SK-N-SH (cell line): ENCODE measurements at regions of chr3 and their contacts with region 1.

Region 1: DNA sequence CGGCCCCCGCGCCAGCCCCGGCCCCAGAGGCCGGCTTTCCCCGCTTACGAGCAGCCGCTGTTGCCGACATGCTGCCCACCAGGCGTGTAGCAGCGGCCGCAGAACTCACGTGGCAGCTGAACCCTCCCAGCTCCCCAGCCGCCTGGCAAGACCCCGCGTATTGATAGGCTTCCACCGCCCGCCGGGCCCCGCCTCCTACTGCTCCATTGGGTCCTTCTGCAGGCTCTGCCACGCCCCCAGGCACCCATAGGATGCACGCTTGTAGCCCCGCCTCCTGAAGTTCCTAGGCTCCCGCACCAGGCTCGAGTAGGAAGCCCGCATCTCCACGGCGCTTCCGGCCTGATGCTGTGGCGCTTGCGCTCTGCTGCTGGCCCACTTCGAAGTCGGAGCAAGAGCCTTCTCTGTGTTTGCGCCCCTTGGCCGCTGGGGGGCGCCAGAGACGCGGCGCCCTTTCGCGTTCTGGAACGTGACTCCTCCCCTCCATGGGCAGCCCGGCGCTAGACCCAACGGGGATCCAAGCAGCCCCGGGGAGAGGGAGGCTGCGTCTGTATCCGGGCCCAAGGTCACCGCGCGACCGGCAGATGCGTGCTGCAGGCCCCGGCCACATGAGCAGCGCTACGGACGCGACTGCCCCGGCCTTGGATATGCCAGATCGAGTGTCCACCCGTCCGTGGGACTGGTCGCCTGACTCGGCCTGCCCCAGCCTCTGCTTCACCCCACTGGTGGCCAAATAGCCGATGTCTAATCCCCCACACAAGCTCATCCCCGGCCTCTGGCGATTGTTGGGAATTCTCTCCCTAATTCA is at the starts of genes PARP3 and RRP9:
- DNase-seq: peak; percentile 99
- H3K4me3 ChIP-seq: peak within 1 kb of the TSS; percentile 85 to 95
- H3K27ac ChIP-seq: peak within 1 kb of the TSS; percentile 85 to 97
- H3K4me1 ChIP-seq: peaks cover 11 to 18% of the 10 kb centered on the region in 2 experiments; a peak in 3 of 4 replicates
- H3K27me3 ChIP-seq: no peaks in the 10 kb centered on the region
- CTCF ChIP-seq: peak; percentile 98
- EP300 ChIP-seq: no peak; a peak in 1 of 4 replicates
- RAD21 ChIP-seq: peak; percentile 98
- polyA plus RNA-seq, gene PARP3: 31.1 and 35.2 TPM in 2 replicates
- polyA plus RNA-seq, gene RRP9: 49.6 and 52.0 TPM in 2 replicates

Region 2: DNA sequence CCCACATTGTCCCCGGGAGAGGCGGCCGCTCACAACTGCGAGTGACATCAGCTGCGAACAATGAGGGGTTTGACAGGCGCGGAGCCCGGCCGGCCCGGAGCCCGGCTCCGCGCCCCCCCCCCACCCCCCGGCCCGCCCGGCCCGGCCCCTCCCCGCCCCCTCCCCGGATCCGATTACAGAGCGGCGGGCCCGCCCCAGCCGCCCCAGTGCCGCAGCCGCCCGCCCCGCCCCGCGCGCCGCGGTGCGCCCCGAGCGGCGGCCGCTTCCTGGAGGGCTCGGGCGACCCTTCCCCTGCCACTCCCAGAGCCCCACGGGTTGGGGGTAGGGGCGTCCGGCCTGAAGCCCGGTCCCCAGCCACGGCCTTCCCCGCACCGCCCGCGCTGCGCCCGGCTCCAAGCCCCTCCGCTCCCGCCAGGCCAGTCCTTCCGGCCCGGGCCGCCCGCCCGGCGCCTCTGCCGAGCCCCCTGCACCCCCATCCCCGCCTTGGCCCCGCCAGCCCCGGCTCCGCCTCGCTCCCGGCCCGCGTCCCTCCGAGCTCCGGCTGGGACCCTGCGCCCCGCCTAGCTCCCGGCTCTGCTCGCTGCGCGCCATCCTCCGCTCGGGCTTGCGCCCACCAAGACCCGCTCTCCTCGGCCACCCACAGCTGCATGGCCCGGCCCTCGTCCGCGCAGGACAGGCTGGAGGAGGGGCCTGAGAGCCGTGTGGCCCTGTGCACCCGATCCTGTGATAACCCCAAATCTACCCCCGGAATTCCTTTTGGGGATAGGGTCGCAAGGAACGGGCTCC is 25.6 kb after region 1 on chr3 and contains the start of gene PCBP4:
- CTCF ChIA-PET with region 1: interaction called, 80 read pairs
- POLR2A ChIA-PET with region 1: interaction called, 19 read pairs
- DNase-seq: peak; percentile 88
- H3K4me3 ChIP-seq: peak within 1 kb of the TSS; percentile 76 to 79
- H3K27ac ChIP-seq: peak within 1 kb of the TSS; percentile 54 to 97
- H3K4me1 ChIP-seq: peaks cover 4 to 67% of the 10 kb centered on the region in 2 experiments; a peak in 2 of 4 replicates
- H3K27me3 ChIP-seq: no peaks in the 10 kb centered on the region
- CTCF ChIP-seq: no peak
- EP300 ChIP-seq: no peak
- RAD21 ChIP-seq: no peak
- polyA plus RNA-seq, gene PCBP4: 97.4 and 118 TPM in 2 replicates

Region 3: GRCh38 chr3:51974963-51975851 is 33.2 kb after region 1 on chr3 and contains the start of gene ABHD14A:
- CTCF ChIA-PET with region 1: interaction called, 80 read pairs
- POLR2A ChIA-PET with region 1: interaction called, 13 read pairs
- DNase-seq: peak; percentile 92
- H3K4me3 ChIP-seq: peak within 1 kb of the TSS; percentile 53 to 85
- H3K27ac ChIP-seq: peak within 1 kb of the TSS; percentile 63 to 90; a peak in 3 of 4 replicates
- H3K4me1 ChIP-seq: peaks cover 7 to 31% of the 10 kb centered on the region in 2 experiments
- H3K27me3 ChIP-seq: no peaks in the 10 kb centered on the region
- CTCF ChIP-seq: no peak
- EP300 ChIP-seq: no peak
- RAD21 ChIP-seq: no peak
- polyA plus RNA-seq, gene ABHD14A: 22.1 and 31.5 TPM in 2 replicates

Region 4: GRCh38 chr3:51982782-51983577 is 41.0 kb after region 1 on chr3 and contains the start of gene ACY1:
- CTCF ChIA-PET with region 1: interaction called, 20 read pairs
- POLR2A ChIA-PET with region 1: interaction called, 4 read pairs
- DNase-seq: peak; percentile 97
- H3K4me3 ChIP-seq: peak within 1 kb of the TSS; percentile 68 to 90
- H3K27ac ChIP-seq: peak within 1 kb of the TSS; percentile 89 to 93
- H3K4me1 ChIP-seq: peaks cover 5 to 19% of the 10 kb centered on the region in 2 experiments; a peak in 3 of 4 replicates
- H3K27me3 ChIP-seq: no peaks in the 10 kb centered on the region
- CTCF ChIP-seq: peak; percentile 4; the same call in 1 of the 2 replicates
- EP300 ChIP-seq: no peak
- RAD21 ChIP-seq: no peak
- polyA plus RNA-seq, gene ACY1: 93.0 and 96.2 TPM in 2 replicates